ENCODE measurements at regions of chrX and their contacts with region 1.

Region 1: GRCh38 chrX:1591102-1591900 is at the start of gene AKAP17A:
- DNase-seq: peak; percentile 92 to 94
- H3K4me3 ChIP-seq: peak within 1 kb of the TSS; percentile 89 to 98 (median 93)
- H3K27ac ChIP-seq: peak within 1 kb of the TSS; percentile 91 to 92
- H3K4me1 ChIP-seq: peaks cover 0 to 3% of the 10 kb centered on the region in 2 donors
- H3K27me3 ChIP-seq: no peaks in the 10 kb centered on the region
- CTCF ChIP-seq: no peak
- POLR2A ChIP-seq: no peak
- total RNA-seq, gene AKAP17A: 32.2 to 62.3 (median 56.3) TPM

Region 2: GRCh38 chrX:1391707-1392375 is 199.5 kb before region 1 on chrX and contains the start of gene SLC25A6:
- intact Hi-C with region 1: loop called (anchors 10 kb)
- DNase-seq: peak; percentile 98 to 99
- H3K4me3 ChIP-seq: peak within 1 kb of the TSS; percentile 86 to 99 (median 97)
- H3K27ac ChIP-seq: peak within 1 kb of the TSS; percentile 97 to 99
- H3K4me1 ChIP-seq: peaks cover 0 to 9% of the 10 kb centered on the region in 2 donors
- H3K27me3 ChIP-seq: no peaks in the 10 kb centered on the region
- CTCF ChIP-seq: peak; percentile 39 to 53 (median 39)
- POLR2A ChIP-seq: peak; percentile 58
- total RNA-seq, gene SLC25A6: 306 to 401 (median 351) TPM

Region 3: GRCh38 chrX:1453951-1454785 is 137.1 kb before region 1 on chrX:
- intact Hi-C with region 1: loop called (anchors 10 kb)
- DNase-seq: peak; percentile 73 to 86
- H3K4me3 ChIP-seq: peak overlapping the region; percentile 41 to 98 (median 77)
- H3K27ac ChIP-seq: peak overlapping the region in 1 of 2 donors; percentile 77
- H3K4me1 ChIP-seq: no peaks in the 10 kb centered on the region
- H3K27me3 ChIP-seq: no peaks in the 10 kb centered on the region
- CTCF ChIP-seq: peak; percentile 76 to 91 (median 83)
- POLR2A ChIP-seq: no peak